GM10248 (cell line): ENCODE measurements at regions of chr9 and their contacts with region 1.

Region 1: DNA sequence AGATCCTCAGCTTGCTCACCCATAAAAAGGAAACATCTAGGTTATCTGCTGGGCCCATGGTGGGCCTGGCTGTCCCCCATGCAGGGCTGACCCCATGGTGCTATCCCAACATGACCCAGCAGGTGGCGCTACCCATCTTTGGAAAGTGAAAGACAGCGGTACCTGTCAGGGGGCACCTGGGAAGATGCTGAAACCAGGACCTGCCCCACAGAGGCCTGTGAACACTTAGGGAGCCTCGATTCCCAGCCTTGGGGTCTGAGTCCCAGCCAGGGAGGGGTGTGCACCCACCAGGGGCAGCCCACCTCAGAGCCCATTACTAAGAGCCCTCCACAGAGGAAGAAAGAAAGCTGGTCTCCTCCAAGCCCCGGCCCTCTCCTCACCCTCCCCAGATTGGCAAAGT is 46.6 kb upstream of the IPPK start:
- DNase-seq: peak; percentile 84
- CTCF ChIP-seq: peak; percentile 88

Region 2: GRCh38 chr9:92680166-92681119 is 36.1 kb before region 1 on chr9:
- CTCF ChIA-PET with region 1: no interaction called
- POLR2A ChIA-PET with region 1: no interaction called
- DNase-seq: no peak
- CTCF ChIP-seq: no peak

Region 3: DNA sequence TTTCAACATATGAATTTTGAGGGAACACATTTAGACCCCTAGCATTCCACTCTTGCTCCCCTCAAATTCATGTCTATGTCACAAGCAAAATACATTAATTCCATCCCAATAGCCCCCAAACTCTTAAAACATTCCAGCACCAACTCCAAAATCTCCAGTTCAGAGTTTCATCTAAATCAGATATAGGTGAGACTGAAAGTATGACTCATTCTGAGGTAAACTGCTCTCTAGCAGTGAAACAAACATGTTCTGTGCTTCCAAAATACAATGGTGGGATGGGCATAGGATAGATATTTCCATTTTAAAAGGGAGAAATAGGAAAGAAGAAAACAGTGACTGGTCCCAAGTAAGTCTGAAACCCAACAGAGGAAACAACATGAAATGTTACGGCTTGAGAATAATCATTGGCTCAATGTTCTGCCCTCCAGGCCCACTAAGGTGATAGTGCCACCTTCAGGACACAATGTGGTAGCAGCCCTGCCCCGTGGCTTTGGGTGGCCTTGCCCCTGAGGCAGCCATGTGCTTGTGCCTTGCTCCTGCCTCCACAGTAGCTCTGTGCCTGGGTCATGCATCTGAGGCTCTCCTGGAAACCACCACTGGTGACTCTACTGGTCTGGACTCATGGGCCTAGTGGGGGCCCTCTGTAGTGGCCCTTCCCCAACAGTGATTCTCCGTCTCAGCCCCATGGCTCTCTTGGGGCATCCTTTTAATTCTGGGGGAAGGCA is 10.2 kb before region 1 on chr9:
- CTCF ChIA-PET with region 1: interaction called, 10 read pairs
- POLR2A ChIA-PET with region 1: no interaction called
- DNase-seq: peak; percentile 50
- CTCF ChIP-seq: peak; percentile 83

Region 4: GRCh38 chr9:92738661-92739081 is 22.1 kb after region 1 on chr9:
- CTCF ChIA-PET with region 1: interaction called, 45 read pairs
- POLR2A ChIA-PET with region 1: no interaction called
- DNase-seq: no peak
- CTCF ChIP-seq: no peak

Region 5: GRCh38 chr9:92756792-92757191 is 40.2 kb after region 1 on chr9:
- CTCF ChIA-PET with region 1: interaction called, 10 read pairs
- POLR2A ChIA-PET with region 1: no interaction called
- DNase-seq: no peak
- CTCF ChIP-seq: no peak

Region 6: GRCh38 chr9:92790542-92791527 is 74.3 kb after region 1 on chr9:
- CTCF ChIA-PET with region 1: interaction called, 191 read pairs
- POLR2A ChIA-PET with region 1: no interaction called
- DNase-seq: peak; percentile 77
- CTCF ChIP-seq: peak; percentile 88